ENCODE measurements at regions of chr5 and their contacts with region 1.

Region 1: DNA sequence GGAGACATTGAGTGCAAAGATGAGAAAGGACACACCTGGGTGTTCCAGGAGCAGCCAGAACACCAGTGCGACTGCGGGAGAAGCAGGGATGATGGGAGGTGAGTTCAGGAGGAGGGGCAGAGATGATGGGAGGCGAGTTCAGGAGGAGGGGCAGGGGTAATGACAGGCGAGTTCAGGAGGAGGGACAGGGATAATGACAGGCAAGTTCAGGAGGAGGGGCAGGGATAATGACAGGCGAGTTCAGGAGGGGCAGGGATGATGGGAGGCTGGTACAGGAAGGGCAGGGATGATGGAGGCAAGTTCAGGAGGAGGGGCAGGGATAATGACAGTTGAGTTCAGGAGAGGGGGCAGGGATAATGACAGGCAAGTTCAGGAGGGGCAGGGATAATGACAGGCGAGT is 17.2 kb upstream of the SPOCK1 start:
- DNase-seq: no peak
- ATAC-seq: no peak
- H3K4me3 ChIP-seq: no peak overlapping the region
- H3K4me3 Mint-ChIP-seq: no peak overlapping the region
- H3K27ac ChIP-seq: no peak overlapping the region
- H3K27ac Mint-ChIP-seq: no peak overlapping the region
- H3K4me1 ChIP-seq: no peaks in the 10 kb centered on the region
- H3K4me1 Mint-ChIP-seq: no peaks in the 10 kb centered on the region
- H3K27me3 ChIP-seq: peaks cover 0 to 5% of the 10 kb centered on the region in 2 experiments
- H3K27me3 Mint-ChIP-seq: peaks cover 31% of the 10 kb centered on the region
- CTCF ChIP-seq: no peak

Region 2: GRCh38 chr5:136998854-136999357 is 517.4 kb before region 1 on chr5:
- CTCF ChIA-PET with region 1: no interaction called
- POLR2A ChIA-PET with region 1: no interaction called
- intact Hi-C with region 1: no loop called
- DNase-seq: no peak
- ATAC-seq: no peak
- H3K4me3 ChIP-seq: no peak overlapping the region
- H3K4me3 Mint-ChIP-seq: no peak overlapping the region
- H3K27ac ChIP-seq: no peak overlapping the region
- H3K27ac Mint-ChIP-seq: no peak overlapping the region
- H3K4me1 ChIP-seq: no peaks in the 10 kb centered on the region
- H3K4me1 Mint-ChIP-seq: no peaks in the 10 kb centered on the region
- H3K27me3 ChIP-seq: no peaks in the 10 kb centered on the region
- H3K27me3 Mint-ChIP-seq: no peaks in the 10 kb centered on the region
- CTCF ChIP-seq: no peak

Region 3: GRCh38 chr5:137491121-137491520 is 25.2 kb before region 1 on chr5:
- CTCF ChIA-PET with region 1: no interaction called
- POLR2A ChIA-PET with region 1: no interaction called
- intact Hi-C with region 1: loop called in 1 of 2 experiments (anchors 1 kb)
- DNase-seq: no peak
- ATAC-seq: no peak
- H3K4me3 ChIP-seq: no peak overlapping the region
- H3K4me3 Mint-ChIP-seq: no peak overlapping the region
- H3K27ac ChIP-seq: no peak overlapping the region
- H3K27ac Mint-ChIP-seq: no peak overlapping the region
- H3K4me1 ChIP-seq: no peaks in the 10 kb centered on the region
- H3K4me1 Mint-ChIP-seq: no peaks in the 10 kb centered on the region
- H3K27me3 ChIP-seq: no peaks in the 10 kb centered on the region
- H3K27me3 Mint-ChIP-seq: peaks cover 6% of the 10 kb centered on the region
- CTCF ChIP-seq: no peak

Region 4: DNA sequence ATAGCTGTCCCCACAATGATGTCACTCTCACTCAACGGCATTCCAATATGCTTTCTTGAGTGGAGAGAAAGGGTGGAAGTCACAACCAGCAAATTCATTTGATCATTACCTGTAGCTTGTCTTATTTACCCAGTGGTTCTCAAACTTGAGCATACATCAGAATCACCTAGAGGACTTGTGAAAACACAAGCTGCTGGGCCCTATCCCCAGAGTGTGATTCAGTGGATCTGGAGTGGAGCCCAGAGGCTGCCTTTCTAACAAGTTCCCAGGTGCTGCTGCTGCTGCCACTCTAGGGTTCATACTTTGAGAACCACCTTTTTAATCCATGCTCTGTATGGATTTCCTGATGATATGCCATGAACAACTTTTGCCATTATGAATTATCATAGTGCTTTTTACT is 124.8 kb after region 1 on chr5:
- CTCF ChIA-PET with region 1: no interaction called
- POLR2A ChIA-PET with region 1: no interaction called
- intact Hi-C with region 1: no loop called
- DNase-seq: no peak
- ATAC-seq: no peak
- H3K4me3 ChIP-seq: no peak overlapping the region
- H3K4me3 Mint-ChIP-seq: no peak overlapping the region
- H3K27ac ChIP-seq: no peak overlapping the region
- H3K27ac Mint-ChIP-seq: no peak overlapping the region
- H3K4me1 ChIP-seq: no peaks in the 10 kb centered on the region
- H3K4me1 Mint-ChIP-seq: no peaks in the 10 kb centered on the region
- H3K27me3 ChIP-seq: no peaks in the 10 kb centered on the region
- H3K27me3 Mint-ChIP-seq: no peaks in the 10 kb centered on the region
- CTCF ChIP-seq: no peak

Region 5: GRCh38 chr5:137695651-137696428 is 179.5 kb after region 1 on chr5:
- CTCF ChIA-PET with region 1: no interaction called
- POLR2A ChIA-PET with region 1: no interaction called
- intact Hi-C with region 1: no loop called
- DNase-seq: peak in 8 of 9 experiments; percentile 13 to 72 (median 22)
- ATAC-seq: peak; percentile 76
- H3K4me3 ChIP-seq: no peak overlapping the region
- H3K4me3 Mint-ChIP-seq: peak overlapping the region; percentile 68
- H3K27ac ChIP-seq: peak overlapping the region; percentile 32 to 66
- H3K27ac Mint-ChIP-seq: peak overlapping the region; percentile 95
- H3K4me1 ChIP-seq: peaks cover 41% of the 10 kb centered on the region
- H3K4me1 Mint-ChIP-seq: peaks cover 55% of the 10 kb centered on the region
- H3K27me3 ChIP-seq: no peaks in the 10 kb centered on the region
- H3K27me3 Mint-ChIP-seq: no peaks in the 10 kb centered on the region
- CTCF ChIP-seq: peak; percentile 23

Region 6: GRCh38 chr5:138408023-138408422 is 891.7 kb after region 1 on chr5:
- CTCF ChIA-PET with region 1: no interaction called
- POLR2A ChIA-PET with region 1: no interaction called
- intact Hi-C with region 1: no loop called
- DNase-seq: peak in 2 of 9 experiments; percentile 18 to 40
- ATAC-seq: peak; percentile 72
- H3K4me3 ChIP-seq: no peak overlapping the region
- H3K4me3 Mint-ChIP-seq: no peak overlapping the region
- H3K27ac ChIP-seq: no peak overlapping the region
- H3K27ac Mint-ChIP-seq: peak overlapping the region; percentile 34
- H3K4me1 ChIP-seq: no peaks in the 10 kb centered on the region
- H3K4me1 Mint-ChIP-seq: peaks cover 10% of the 10 kb centered on the region
- H3K27me3 ChIP-seq: no peaks in the 10 kb centered on the region
- H3K27me3 Mint-ChIP-seq: no peaks in the 10 kb centered on the region
- CTCF ChIP-seq: no peak